Transverse colon (tissue), 4 donors: ENCODE measurements at regions of chrX and their contacts with region 1.

Region 1: DNA sequence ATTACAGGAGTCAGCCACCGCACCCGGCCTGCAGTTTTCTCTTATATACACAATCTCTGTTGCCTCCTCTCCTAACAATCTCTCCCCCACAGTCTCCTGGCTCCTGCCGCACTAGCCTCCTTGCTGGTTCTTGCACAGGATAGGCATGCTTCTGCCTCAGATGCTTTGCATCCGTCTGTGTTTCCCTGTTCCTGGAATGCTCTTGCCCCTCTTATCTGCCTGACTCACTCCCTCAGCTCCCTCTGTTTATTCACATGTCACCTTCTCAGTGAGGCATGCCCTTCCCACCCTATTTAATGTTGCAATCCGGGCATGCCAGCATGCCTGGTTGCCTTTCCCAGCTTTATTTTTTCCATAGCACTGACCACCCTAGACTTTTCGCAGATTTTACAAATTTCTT is 161.9 kb downstream of the PHF8 start:
- DNase-seq: no peak
- H3K4me3 ChIP-seq: no peak overlapping the region
- H3K27ac ChIP-seq: no peak overlapping the region
- H3K4me1 ChIP-seq: no peaks in the 10 kb centered on the region
- H3K27me3 ChIP-seq: no peaks in the 10 kb centered on the region
- CTCF ChIP-seq: no peak
- EP300 ChIP-seq: no peak
- POLR2A ChIP-seq: no peak

Region 2: GRCh38 chrX:53900623-53901022 is 18.3 kb after region 1 on chrX:
- in situ Hi-C with region 1: no loop called
- intact Hi-C with region 1: loop called (anchors 1 kb)
- DNase-seq: no peak
- H3K4me3 ChIP-seq: no peak overlapping the region
- H3K27ac ChIP-seq: no peak overlapping the region
- H3K4me1 ChIP-seq: no peaks in the 10 kb centered on the region
- H3K27me3 ChIP-seq: no peaks in the 10 kb centered on the region
- CTCF ChIP-seq: no peak
- EP300 ChIP-seq: no peak
- POLR2A ChIP-seq: no peak